Heart left ventricle (tissue), 16 donors: ENCODE measurements at regions of chr4 and their contacts with region 1.

Region 1: DNA sequence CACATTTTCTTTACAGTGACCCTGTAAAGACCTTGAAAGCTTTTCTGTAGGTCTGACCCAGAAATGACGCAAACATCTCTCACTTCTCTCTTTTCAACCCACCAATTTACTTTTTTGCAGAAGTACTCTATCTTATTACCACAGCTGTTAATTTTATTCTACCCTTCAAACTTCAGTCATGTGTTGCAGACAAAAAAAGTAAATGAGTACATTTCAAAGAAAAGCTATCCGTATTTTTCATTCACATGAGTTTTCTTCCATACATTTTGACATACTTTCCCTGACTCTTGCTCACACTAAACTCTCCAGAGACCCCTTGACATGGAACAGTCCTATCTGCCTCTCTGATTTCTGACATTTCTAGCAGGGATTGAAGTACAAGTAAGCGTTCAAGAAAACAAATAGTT is 51.7 kb downstream of the SLC7A11 start:
- DNase-seq: no peak
- ATAC-seq: no peak
- H3K4me3 ChIP-seq: no peak overlapping the region
- H3K27ac ChIP-seq: no peak overlapping the region
- H3K4me1 ChIP-seq: peaks cover 0 to 20% (median 0%) of the 10 kb centered on the region in 12 donors
- H3K27me3 ChIP-seq: no peaks in the 10 kb centered on the region
- CTCF ChIP-seq: no peak
- POLR2A ChIP-seq: no peak

Region 2: DNA sequence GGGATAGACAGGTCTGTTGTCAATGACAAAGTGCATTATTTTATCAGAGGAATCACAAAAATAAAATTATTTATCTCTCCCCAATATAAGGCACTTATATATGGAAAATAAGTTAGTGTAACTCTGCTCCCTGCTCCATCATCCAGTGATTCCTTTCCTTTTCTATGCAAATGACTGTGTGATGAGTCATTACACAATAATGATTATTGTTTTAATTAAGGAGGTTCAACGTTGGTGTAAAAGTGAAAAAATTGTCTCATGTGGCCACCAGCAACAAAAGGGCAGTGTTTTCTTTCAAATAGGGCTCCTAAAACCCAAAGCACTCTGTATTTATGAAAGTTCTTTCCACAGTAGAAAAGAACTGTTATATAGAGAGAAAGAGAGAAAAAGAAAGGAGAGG is 35.0 kb after region 1 on chr4:
- intact Hi-C with region 1: loop called in 1 of 10 experiments (anchors 5 kb)
- DNase-seq: no peak
- ATAC-seq: no peak
- H3K4me3 ChIP-seq: no peak overlapping the region
- H3K27ac ChIP-seq: no peak overlapping the region
- H3K4me1 ChIP-seq: peaks cover 0 to 4% (median 0%) of the 10 kb centered on the region in 12 donors
- H3K27me3 ChIP-seq: no peaks in the 10 kb centered on the region
- CTCF ChIP-seq: no peak
- POLR2A ChIP-seq: no peak

Region 3: GRCh38 chr4:138401334-138401733 is 210.9 kb after region 1 on chr4:
- intact Hi-C with region 1: loop called in 2 of 10 experiments (anchors 2 to 5 kb)
- DNase-seq: peak; percentile 21 to 71 (median 63)
- ATAC-seq: peak in 1 of 4 donors; percentile 54
- H3K4me3 ChIP-seq: no peak overlapping the region
- H3K27ac ChIP-seq: peak overlapping the region in 3 of 12 donors; percentile 28 to 53 (median 29)
- H3K4me1 ChIP-seq: peaks cover 0 to 36% (median 7%) of the 10 kb centered on the region in 12 donors
- H3K27me3 ChIP-seq: no peaks in the 10 kb centered on the region
- CTCF ChIP-seq: no peak
- POLR2A ChIP-seq: no peak